IMR-90 (cell line): ENCODE measurements at regions of chr17 and their contacts with region 1.

Region 1: DNA sequence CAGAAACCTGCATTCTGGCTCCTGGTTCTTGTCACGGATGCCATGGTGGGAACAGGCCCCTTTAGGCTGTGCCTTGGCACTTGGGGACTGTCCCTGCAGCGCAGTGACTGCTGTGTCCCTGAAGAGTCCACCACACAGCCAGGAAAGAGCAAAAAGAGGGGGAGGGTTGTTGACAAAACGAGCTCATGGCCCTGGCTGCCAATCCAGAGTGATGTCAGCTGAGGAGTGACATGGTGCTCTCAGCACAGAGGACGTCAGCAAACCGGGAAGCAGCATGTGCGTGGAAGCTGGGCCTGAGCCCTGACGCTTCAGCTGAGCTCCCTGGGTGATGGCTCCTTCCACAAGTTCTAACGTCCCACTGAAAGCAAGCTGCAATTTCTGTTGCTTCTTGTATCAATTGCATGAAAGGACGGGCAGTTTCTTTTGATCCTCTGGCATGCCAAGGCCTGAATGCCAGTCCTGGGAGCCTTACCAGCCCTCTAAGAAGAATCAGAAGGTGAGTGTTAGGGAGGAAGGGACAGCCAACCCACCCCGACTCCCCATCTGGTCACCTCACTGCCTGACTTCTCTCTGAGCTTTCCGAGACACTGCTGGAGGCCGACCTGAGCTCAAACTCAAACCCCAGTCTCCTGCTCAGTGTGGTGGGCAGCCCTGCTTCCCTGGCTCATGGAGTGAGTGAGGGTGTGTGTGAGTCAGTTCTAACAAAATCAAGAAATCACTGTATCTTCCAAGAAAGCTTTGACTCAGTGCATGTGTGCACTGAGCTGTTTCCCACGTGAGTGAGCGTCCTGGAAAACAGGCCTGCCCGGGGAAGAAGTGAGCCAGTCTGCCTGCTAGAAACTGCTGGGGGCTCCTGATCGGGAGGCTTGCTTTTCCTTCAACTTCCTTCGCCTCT is 14.7 kb upstream of the WNT3 start:
- DNase-seq: peak; percentile 87
- ATAC-seq: peak; percentile 74
- H3K4me3 ChIP-seq: no peak overlapping the region
- H3K27ac ChIP-seq: no peak overlapping the region
- H3K4me1 ChIP-seq: no peaks in the 10 kb centered on the region
- H3K27me3 ChIP-seq: peaks cover 21% of the 10 kb centered on the region; the same call in 1 of the 2 replicates
- CTCF ChIP-seq: no peak
- POLR2A ChIP-seq: no peak
- RAD21 ChIP-seq: no peak; the same call in 1 of the 2 replicates

Region 2: GRCh38 chr17:46758623-46759022 is 74.6 kb before region 1 on chr17:
- CTCF ChIA-PET with region 1: no interaction called
- POLR2A ChIA-PET with region 1: no interaction called
- dilution Hi-C with region 1: no loop called
- in situ Hi-C with region 1: no loop called
- intact Hi-C with region 1: loop called (anchors 5 kb)
- DNase-seq: peak; percentile 34
- ATAC-seq: peak; percentile 29; the same call in 1 of the 2 replicates
- H3K4me3 ChIP-seq: no peak overlapping the region
- H3K27ac ChIP-seq: no peak overlapping the region
- H3K4me1 ChIP-seq: peaks cover 3% of the 10 kb centered on the region; the same call in 1 of the 2 replicates
- H3K27me3 ChIP-seq: no peaks in the 10 kb centered on the region
- CTCF ChIP-seq: no peak
- POLR2A ChIP-seq: no peak
- RAD21 ChIP-seq: no peak

Region 3: GRCh38 chr17:47099987-47100711 is 267.0 kb after region 1 on chr17:
- CTCF ChIA-PET with region 1: no interaction called
- POLR2A ChIA-PET with region 1: no interaction called
- dilution Hi-C with region 1: no loop called
- in situ Hi-C with region 1: no loop called
- intact Hi-C with region 1: no loop called
- DNase-seq: peak; percentile 84
- ATAC-seq: peak; percentile 100
- H3K4me3 ChIP-seq: peak overlapping the region; percentile 93
- H3K27ac ChIP-seq: peak overlapping the region; percentile 82
- H3K4me1 ChIP-seq: peaks cover 2% of the 10 kb centered on the region; the same call in 1 of the 2 replicates
- H3K27me3 ChIP-seq: no peaks in the 10 kb centered on the region
- CTCF ChIP-seq: no peak
- POLR2A ChIP-seq: no peak
- RAD21 ChIP-seq: no peak